Naive thymus-derived CD4-positive, alpha-beta T cell (primary cell): ENCODE measurements at regions of chr12 and their contacts with region 1.

Region 1: DNA sequence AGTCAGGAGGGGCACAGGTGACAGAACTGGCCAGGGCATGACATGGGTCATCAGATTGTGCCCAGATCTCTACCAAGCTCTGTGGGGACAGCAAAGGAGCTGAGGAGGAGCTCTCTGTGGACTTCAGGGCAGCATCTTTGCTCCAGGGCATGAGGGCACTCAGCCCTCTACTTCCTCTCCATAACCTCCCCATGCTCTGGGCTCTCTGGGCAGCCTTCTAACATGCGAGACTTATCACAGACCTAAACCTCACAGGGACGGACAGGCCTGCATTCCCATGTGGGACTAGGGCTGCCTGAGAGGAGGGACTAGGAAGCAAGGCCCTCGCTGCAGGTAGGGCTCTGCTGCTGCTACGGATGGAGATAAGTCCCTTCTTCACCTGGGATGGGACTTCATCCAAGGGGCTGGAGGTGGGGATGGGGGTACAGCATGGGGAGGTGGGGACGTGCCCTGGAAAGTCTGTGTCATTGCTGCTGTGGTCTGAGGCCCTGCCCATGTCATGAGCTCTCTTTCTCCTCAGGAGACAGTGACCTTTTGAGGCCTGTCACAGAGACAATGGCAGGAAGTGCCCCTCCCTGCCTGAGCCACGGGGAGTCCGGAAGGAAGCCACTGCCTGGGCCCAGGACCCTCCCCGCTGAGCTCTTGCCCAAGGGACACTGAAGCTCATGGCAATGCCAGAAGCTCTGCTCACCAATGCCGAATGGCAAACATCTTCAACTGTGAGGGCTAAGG is 44.1 kb downstream of the PITPNM2 start:
- DNase-seq: peak in 8 of 9 donors; percentile 35 to 69 (median 48)
- ATAC-seq: peak; percentile 91
- H3K4me3 ChIP-seq: peak overlapping the region; percentile 48
- H3K4me3 Mint-ChIP-seq: peak overlapping the region; percentile 26 to 87 (median 78)
- H3K27ac ChIP-seq: peak overlapping the region; percentile 62
- H3K27ac Mint-ChIP-seq: peak overlapping the region; percentile 87 to 98 (median 95)
- H3K4me1 ChIP-seq: peaks cover 20 to 45% of the 10 kb centered on the region in 2 donors
- H3K4me1 Mint-ChIP-seq: peaks cover 52 to 85% (median 79%) of the 10 kb centered on the region in 7 donors
- H3K27me3 ChIP-seq: no peaks in the 10 kb centered on the region
- H3K27me3 Mint-ChIP-seq: no peaks in the 10 kb centered on the region

Region 2: GRCh38 chr12:122459211-122459610 is 647.6 kb before region 1 on chr12:
- CTCF ChIA-PET with region 1: no interaction called
- POLR2A ChIA-PET with region 1: no interaction called
- intact Hi-C with region 1: no loop called
- DNase-seq: no peak
- ATAC-seq: no peak
- H3K4me3 ChIP-seq: no peak overlapping the region
- H3K4me3 Mint-ChIP-seq: no peak overlapping the region
- H3K27ac ChIP-seq: no peak overlapping the region
- H3K27ac Mint-ChIP-seq: no peak overlapping the region
- H3K4me1 ChIP-seq: peaks cover under 1 to 5% of the 10 kb centered on the region in 2 donors
- H3K4me1 Mint-ChIP-seq: peaks cover 4 to 28% (median 9%) of the 10 kb centered on the region in 7 donors
- H3K27me3 ChIP-seq: no peaks in the 10 kb centered on the region
- H3K27me3 Mint-ChIP-seq: no peaks in the 10 kb centered on the region

Region 3: DNA sequence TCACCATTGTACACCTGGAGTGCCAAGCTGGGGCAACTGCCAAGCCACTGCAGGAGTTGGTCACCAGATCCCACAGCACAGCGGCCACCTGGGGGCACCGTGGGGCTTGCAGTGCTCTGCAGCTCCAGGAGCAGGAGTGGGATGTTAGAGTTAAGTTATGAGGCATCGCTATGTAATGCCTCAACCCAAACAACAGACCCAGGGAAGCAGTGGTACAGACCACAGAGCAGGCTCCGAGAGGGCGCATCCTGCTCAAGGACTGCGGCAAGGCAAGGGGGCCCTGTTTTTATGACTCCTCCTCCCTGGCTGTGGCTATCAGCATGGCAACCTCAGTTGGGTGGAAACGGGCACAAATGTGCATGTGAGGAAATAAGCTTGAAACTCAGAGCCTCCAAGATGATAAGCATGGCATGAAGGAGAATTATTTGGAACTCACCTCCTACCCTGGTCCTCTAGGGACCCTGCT is 63.2 kb before region 1 on chr12:
- CTCF ChIA-PET with region 1: interaction called, 10 read pairs
- POLR2A ChIA-PET with region 1: interaction called, 3 read pairs
- intact Hi-C with region 1: no loop called
- DNase-seq: peak; percentile 36 to 83 (median 71)
- ATAC-seq: peak; percentile 92
- H3K4me3 ChIP-seq: no peak overlapping the region
- H3K4me3 Mint-ChIP-seq: peak overlapping the region in 9 of 10 donors; percentile 13 to 69 (median 56)
- H3K27ac ChIP-seq: peak overlapping the region; percentile 38
- H3K27ac Mint-ChIP-seq: peak overlapping the region; percentile 40 to 95 (median 84)
- H3K4me1 ChIP-seq: peaks cover 10 to 17% of the 10 kb centered on the region in 2 donors
- H3K4me1 Mint-ChIP-seq: peaks cover 27 to 65% (median 52%) of the 10 kb centered on the region in 7 donors
- H3K27me3 ChIP-seq: no peaks in the 10 kb centered on the region
- H3K27me3 Mint-ChIP-seq: no peaks in the 10 kb centered on the region

Region 4: DNA sequence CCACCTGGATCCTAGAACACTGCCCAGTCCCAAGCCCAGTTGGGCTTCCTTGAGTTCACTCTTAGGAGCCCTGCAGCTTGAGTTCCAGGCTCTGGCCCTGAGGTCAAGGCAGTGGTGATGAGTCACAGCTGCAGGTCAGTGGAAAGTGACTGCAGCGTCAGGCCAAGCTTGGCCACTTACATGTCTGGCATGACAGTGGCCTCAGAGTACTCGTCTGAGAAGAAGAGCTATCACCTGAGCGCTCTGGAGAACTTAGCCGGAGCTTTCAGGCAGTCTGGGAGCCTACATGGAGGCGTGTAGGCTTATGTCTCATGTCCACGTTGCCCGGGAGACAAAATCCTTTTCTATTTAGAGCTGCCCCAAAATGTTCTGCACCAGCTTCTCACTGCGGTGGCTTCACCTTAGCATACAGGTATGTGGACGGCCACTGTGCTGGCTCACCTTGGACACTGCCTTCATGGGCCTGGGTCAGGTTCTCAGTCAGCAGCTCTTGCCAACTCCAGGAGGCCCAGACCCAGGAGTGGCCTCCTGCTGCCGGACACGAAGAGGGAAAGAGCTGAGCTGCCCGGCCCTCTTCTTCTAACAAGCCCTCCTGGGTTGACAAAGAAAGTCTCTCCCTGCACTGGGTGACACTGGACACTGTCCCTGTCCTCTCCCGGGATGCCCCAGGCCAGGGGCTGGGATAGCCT is 50.6 kb before region 1 on chr12:
- CTCF ChIA-PET with region 1: no interaction called
- POLR2A ChIA-PET with region 1: no interaction called
- intact Hi-C with region 1: no loop called
- DNase-seq: no peak
- ATAC-seq: no peak
- H3K4me3 ChIP-seq: no peak overlapping the region
- H3K4me3 Mint-ChIP-seq: no peak overlapping the region
- H3K27ac ChIP-seq: no peak overlapping the region
- H3K27ac Mint-ChIP-seq: peak overlapping the region in 3 of 9 donors; percentile 5 to 56 (median 38)
- H3K4me1 ChIP-seq: no peaks in the 10 kb centered on the region
- H3K4me1 Mint-ChIP-seq: peaks cover 9 to 36% (median 23%) of the 10 kb centered on the region in 7 donors
- H3K27me3 ChIP-seq: no peaks in the 10 kb centered on the region
- H3K27me3 Mint-ChIP-seq: no peaks in the 10 kb centered on the region

Region 5: DNA sequence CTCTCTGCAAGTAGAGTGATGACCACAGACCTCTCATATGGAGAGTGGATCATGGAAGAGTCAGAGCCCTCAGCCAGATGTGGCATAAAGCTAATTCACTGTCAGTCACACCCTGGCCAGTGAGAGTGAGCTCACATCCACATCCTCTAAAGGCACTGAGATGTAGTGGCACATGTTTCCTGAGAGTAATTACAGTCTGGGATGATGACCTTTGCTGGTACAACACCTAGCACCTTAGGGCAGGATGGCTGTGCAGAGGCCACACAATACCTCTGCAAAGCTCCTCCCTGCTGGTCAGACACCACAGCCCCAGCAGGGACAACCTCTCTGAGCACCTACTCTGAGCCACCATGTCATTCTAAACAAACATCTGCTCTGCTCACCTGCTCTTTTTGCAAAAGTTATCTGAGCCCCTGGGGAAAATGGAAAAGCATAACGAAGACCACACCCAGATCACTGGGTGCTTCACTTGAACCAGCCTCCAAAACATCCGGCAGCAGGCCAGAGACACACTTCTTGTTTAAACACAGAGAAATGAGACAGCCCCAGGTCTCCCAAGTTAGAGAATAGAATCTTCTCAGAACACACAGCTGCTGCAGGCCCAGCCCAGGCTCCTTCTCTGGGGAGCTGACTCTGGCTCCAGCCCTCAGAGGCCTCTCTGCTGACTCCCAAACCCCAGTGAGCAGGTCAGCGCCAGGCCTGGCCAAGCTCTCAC is 13.8 kb after region 1 on chr12:
- CTCF ChIA-PET with region 1: interaction called, 7 read pairs
- POLR2A ChIA-PET with region 1: interaction called, 91 read pairs
- intact Hi-C with region 1: loop called (anchors 1 to 2 kb)
- DNase-seq: peak in 7 of 9 donors; percentile 27 to 76 (median 67)
- ATAC-seq: peak; percentile 60
- H3K4me3 ChIP-seq: no peak overlapping the region
- H3K4me3 Mint-ChIP-seq: peak overlapping the region; percentile 66 to 83 (median 73)
- H3K27ac ChIP-seq: peak overlapping the region; percentile 71
- H3K27ac Mint-ChIP-seq: peak overlapping the region; percentile 91 to 100 (median 96)
- H3K4me1 ChIP-seq: peaks cover 3 to 68% of the 10 kb centered on the region in 2 donors
- H3K4me1 Mint-ChIP-seq: peaks cover 40 to 81% (median 75%) of the 10 kb centered on the region in 7 donors
- H3K27me3 ChIP-seq: no peaks in the 10 kb centered on the region
- H3K27me3 Mint-ChIP-seq: no peaks in the 10 kb centered on the region

Region 6: GRCh38 chr12:123131879-123132452 is 25.2 kb after region 1 on chr12:
- CTCF ChIA-PET with region 1: interaction called, 7 read pairs
- POLR2A ChIA-PET with region 1: interaction called, 7 read pairs
- intact Hi-C with region 1: loop called in 1 of 2 experiments (anchors 1 kb)
- DNase-seq: peak in 8 of 9 donors; percentile 34 to 83 (median 71)
- ATAC-seq: peak; percentile 96
- H3K4me3 ChIP-seq: peak overlapping the region; percentile 24
- H3K4me3 Mint-ChIP-seq: peak overlapping the region; percentile 75 to 83 (median 79)
- H3K27ac ChIP-seq: peak overlapping the region; percentile 84
- H3K27ac Mint-ChIP-seq: peak overlapping the region; percentile 89 to 98 (median 95)
- H3K4me1 ChIP-seq: peaks cover 0 to 27% of the 10 kb centered on the region in 2 donors
- H3K4me1 Mint-ChIP-seq: peaks cover 24 to 70% (median 55%) of the 10 kb centered on the region in 7 donors
- H3K27me3 ChIP-seq: no peaks in the 10 kb centered on the region
- H3K27me3 Mint-ChIP-seq: no peaks in the 10 kb centered on the region